ENCODE measurements at regions of chr4 and their contacts with region 1.

Region 1: DNA sequence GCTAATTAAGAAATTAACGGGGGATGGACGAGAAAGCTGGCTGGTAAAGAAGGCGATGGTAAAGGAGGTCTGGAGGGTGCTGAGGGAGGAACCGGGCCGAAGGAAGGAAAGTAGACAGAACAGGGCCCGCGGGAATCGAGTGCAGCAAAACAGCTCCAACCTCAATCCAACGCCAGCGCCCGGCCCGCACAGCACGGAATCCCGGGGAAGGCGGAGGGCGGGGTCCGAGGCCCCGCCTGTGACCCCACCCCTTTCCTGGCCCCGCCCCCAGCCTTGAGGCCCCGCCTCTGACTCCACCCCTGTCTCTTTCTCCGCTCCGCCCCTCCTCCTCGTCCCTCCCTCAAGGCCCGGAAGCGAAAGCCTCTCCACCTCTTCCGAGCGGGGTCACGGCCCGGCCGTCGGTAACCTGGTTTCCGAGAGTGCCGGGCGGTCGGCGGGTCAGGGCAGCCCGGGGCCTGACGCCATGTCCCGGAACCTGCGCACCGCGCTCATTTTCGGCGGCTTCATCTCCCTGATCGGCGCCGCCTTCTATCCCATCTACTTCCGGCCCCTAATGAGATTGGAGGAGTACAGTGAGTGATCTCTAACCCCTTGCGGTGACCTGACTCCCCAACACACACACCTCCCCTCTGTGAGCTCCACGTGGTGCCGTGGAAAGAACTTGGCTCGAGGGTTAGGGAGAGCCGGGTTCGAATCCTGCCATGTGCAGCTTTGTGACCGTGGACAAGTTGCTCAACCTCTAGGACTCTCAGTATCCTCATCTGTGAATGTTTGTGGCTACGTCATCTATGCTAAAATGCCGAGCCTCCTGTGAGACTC is at the start of gene SMIM20:
- DNase-seq: peak; percentile 75
- H3K4me3 ChIP-seq: peak within 1 kb of the TSS; percentile 80
- H3K27ac ChIP-seq: peak within 1 kb of the TSS; percentile 78
- H3K27me3 ChIP-seq: no peaks in the 10 kb centered on the region
- CTCF ChIP-seq: no peak
- polyA plus RNA-seq, gene SMIM20: 38.6 and 55.5 TPM in 2 replicates

Region 2: DNA sequence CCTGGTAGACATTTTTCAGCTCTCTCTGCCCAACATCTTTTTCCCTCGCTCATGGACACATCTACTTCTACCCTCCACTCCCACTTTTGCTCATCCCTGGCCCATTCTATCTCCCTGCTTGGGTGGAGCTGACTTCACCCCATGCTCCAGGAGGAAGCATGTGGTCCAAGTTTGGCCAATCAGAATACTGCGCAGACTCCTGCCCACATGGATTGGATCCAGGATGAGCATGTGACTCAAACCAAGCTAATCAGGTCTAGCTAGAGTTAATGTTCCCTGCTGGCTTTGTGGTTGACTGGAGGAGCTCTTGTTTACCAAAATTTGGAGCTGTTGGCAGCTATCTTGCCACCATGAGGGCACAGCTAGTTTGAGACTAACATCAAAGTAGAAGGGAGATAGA is 22.6 kb after region 1 on chr4:
- CTCF ChIA-PET with region 1: no interaction called
- POLR2A ChIA-PET with region 1: interaction called, 11 read pairs
- DNase-seq: no peak
- H3K4me3 ChIP-seq: no peak overlapping the region
- H3K27ac ChIP-seq: no peak overlapping the region
- H3K27me3 ChIP-seq: no peaks in the 10 kb centered on the region
- CTCF ChIP-seq: no peak

Measured in AG04450 (cell line).